IMR-90 (cell line): ENCODE measurements at regions of chr4 and their contacts with region 1.

Region 1: GRCh38 chr4:26459054-26459755 is 31.1 kb downstream of the CCKAR start:
- DNase-seq: peak; percentile 86
- ATAC-seq: peak; percentile 53
- H3K4me3 ChIP-seq: no peak overlapping the region
- H3K27ac ChIP-seq: peak overlapping the region; percentile 82; the same call in 1 of the 2 replicates
- H3K4me1 ChIP-seq: peaks cover 22% of the 10 kb centered on the region
- H3K27me3 ChIP-seq: no peaks in the 10 kb centered on the region
- CTCF ChIP-seq: peak; percentile 65
- POLR2A ChIP-seq: no peak
- RAD21 ChIP-seq: peak; percentile 73

Region 2: GRCh38 chr4:25938787-25939186 is 520.4 kb before region 1 on chr4:
- CTCF ChIA-PET with region 1: no interaction called
- POLR2A ChIA-PET with region 1: no interaction called
- dilution Hi-C with region 1: no loop called
- in situ Hi-C with region 1: no loop called
- intact Hi-C with region 1: no loop called
- DNase-seq: peak; percentile 77
- ATAC-seq: peak; percentile 61
- H3K4me3 ChIP-seq: no peak overlapping the region
- H3K27ac ChIP-seq: no peak overlapping the region
- H3K4me1 ChIP-seq: peaks cover 8% of the 10 kb centered on the region
- H3K27me3 ChIP-seq: peaks cover 5% of the 10 kb centered on the region
- CTCF ChIP-seq: no peak
- POLR2A ChIP-seq: no peak
- RAD21 ChIP-seq: no peak

Region 3: DNA sequence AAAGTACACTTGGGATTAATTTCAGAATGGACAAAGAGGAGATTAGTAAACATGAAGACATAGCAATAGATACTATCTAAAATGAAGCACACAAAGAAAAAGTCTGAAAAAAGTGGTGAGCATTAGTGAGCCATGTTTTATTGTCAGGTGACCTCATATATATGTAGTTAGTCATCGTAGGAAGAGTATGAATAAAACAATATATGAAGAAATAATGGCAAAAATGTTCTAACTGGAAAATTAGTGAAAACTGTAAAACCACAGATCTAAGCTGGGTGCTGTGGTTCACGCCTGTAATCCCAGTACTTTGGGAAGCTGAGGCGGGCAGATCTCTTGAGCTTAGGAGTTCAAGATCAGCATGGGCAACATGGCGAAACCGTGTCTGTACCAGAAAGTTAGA is 70.5 kb before region 1 on chr4:
- CTCF ChIA-PET with region 1: interaction called, 12 read pairs
- POLR2A ChIA-PET with region 1: no interaction called
- dilution Hi-C with region 1: no loop called
- in situ Hi-C with region 1: no loop called
- intact Hi-C with region 1: no loop called
- DNase-seq: peak; percentile 13
- ATAC-seq: no peak
- H3K4me3 ChIP-seq: no peak overlapping the region
- H3K27ac ChIP-seq: no peak overlapping the region
- H3K4me1 ChIP-seq: peaks cover 4% of the 10 kb centered on the region
- H3K27me3 ChIP-seq: no peaks in the 10 kb centered on the region
- CTCF ChIP-seq: no peak
- POLR2A ChIP-seq: no peak
- RAD21 ChIP-seq: no peak

Region 4: DNA sequence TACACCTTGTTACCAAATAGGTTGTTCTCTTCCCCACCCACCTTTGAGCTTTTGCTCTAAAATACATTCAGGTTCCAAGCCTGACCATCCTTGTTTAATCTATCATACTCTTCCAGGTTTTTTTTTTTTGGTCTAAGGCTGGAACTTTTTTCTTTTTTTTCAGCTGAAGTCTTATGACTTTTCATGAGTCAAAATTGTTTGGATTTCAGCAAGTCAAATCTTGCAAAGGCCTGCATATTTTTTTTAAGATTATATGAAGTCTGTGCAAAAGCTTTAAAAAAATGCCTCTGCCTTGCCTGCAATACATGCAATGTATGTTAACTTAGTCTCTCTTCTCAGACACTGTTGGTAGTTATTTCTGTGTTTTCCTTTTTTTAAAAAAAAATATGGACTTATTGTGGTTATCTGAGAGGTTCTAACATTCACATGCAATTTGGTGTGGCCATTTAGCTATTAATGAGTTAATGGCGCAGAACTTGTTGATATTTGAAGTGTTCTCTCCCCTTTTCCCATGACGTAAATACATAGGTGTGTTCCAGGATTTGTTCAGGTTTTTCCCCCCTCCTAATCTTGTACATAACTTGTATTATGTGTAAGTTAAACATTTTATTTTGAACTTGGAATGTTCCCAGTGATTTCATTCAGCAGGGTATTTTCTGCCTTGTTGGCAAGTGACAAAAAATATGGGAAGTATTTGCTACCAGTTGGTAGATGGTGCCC is 27.6 kb before region 1 on chr4:
- CTCF ChIA-PET with region 1: interaction called, 10 read pairs
- POLR2A ChIA-PET with region 1: no interaction called
- dilution Hi-C with region 1: no loop called
- in situ Hi-C with region 1: no loop called
- intact Hi-C with region 1: no loop called
- DNase-seq: peak; percentile 55
- ATAC-seq: no peak
- H3K4me3 ChIP-seq: no peak overlapping the region
- H3K27ac ChIP-seq: no peak overlapping the region
- H3K4me1 ChIP-seq: peaks cover 5% of the 10 kb centered on the region
- H3K27me3 ChIP-seq: no peaks in the 10 kb centered on the region
- CTCF ChIP-seq: no peak
- POLR2A ChIP-seq: no peak
- RAD21 ChIP-seq: no peak

Region 5: GRCh38 chr4:26583865-26584652 is 124.9 kb after region 1 on chr4 and contains the start of gene TBC1D19:
- CTCF ChIA-PET with region 1: no interaction called
- POLR2A ChIA-PET with region 1: no interaction called
- dilution Hi-C with region 1: no loop called
- in situ Hi-C with region 1: no loop called
- intact Hi-C with region 1: loop called (anchors 2 kb)
- DNase-seq: peak; percentile 85
- ATAC-seq: peak; percentile 99
- H3K4me3 ChIP-seq: peak within 1 kb of the TSS; percentile 76
- H3K27ac ChIP-seq: peak within 1 kb of the TSS; percentile 69
- H3K4me1 ChIP-seq: no peaks in the 10 kb centered on the region
- H3K27me3 ChIP-seq: no peaks in the 10 kb centered on the region
- CTCF ChIP-seq: peak; percentile 4; the same call in 1 of the 2 replicates
- POLR2A ChIP-seq: no peak
- RAD21 ChIP-seq: peak; percentile 33
- total RNA-seq, gene TBC1D19: 17.6 and 31.4 TPM in 2 replicates

Region 6: DNA sequence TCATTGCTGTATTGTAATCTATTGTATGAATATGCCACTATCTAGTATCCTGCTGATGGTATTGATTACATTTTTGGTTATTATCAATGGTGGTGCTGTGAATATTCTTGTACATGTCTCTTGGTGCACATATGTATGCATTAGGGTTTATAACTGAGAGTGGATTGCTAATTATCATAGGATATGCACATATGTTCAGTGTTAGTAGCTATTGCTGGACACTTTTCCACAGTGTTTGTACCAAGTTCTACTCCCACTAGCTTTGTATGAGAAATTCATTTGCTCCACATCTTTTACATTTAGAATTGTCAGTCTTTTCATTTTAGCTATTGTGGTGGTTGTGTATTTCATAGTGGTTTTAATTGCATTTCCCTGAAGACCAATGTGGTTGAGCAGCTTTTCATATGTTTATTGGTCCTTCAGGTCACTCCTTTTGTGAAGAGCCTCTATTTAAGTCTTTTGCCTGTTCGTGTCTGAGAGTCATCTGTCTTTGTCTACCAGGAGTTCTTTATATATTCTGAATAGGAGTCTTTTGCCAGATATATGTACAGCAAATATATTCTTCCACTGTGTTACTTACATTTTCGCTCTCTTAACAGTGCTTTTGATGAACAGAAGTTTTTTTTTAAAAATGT is 211.8 kb after region 1 on chr4:
- CTCF ChIA-PET with region 1: no interaction called
- POLR2A ChIA-PET with region 1: interaction called, 11 read pairs
- dilution Hi-C with region 1: no loop called
- in situ Hi-C with region 1: no loop called
- intact Hi-C with region 1: no loop called
- DNase-seq: no peak
- ATAC-seq: no peak
- H3K4me3 ChIP-seq: no peak overlapping the region
- H3K27ac ChIP-seq: no peak overlapping the region
- H3K4me1 ChIP-seq: no peaks in the 10 kb centered on the region
- H3K27me3 ChIP-seq: no peaks in the 10 kb centered on the region
- CTCF ChIP-seq: no peak
- POLR2A ChIP-seq: no peak
- RAD21 ChIP-seq: no peak

Region 7: DNA sequence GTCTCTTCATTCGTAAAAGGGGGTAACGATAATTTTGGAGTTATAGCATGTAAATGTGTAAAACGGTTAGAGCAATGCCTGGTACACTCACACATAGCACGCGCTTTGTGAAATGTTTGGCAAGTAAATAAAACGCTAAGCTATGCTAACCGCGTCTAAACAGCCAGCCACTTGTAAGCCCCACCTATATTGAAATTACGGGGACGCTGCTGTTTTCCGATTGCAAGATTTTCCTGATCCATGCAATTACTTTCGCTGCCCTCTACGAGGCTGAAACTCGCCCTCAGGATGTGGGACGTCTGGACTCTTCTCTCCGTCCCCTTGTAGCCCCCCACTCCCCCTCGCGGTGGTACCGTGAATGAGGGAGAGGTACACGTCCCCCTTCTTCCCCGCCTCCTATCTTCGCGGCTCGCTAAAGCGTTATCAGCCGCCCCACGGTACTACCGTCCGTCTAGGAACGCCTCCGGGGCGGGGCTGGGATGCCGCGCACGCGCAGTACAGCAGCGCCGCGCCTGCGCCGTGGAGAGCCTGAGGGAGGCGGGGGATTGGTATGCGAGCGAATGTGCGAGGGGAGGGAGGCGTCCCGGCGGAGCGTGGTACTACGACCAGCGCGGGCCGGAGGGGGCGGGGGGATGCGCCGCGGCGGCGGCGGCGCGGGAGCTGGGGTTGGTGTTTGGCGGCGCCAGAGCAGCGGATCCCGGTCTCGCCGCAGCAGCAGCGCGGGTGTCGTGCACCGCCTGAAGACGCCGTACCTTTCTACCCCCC is 401.1 kb after region 1 on chr4 and contains the start of gene STIM2:
- CTCF ChIA-PET with region 1: no interaction called
- POLR2A ChIA-PET with region 1: no interaction called
- dilution Hi-C with region 1: no loop called
- in situ Hi-C with region 1: no loop called
- intact Hi-C with region 1: loop called (anchors 2 kb)
- DNase-seq: peak; percentile 96
- ATAC-seq: peak; percentile 78
- H3K4me3 ChIP-seq: peak within 1 kb of the TSS; percentile 62
- H3K27ac ChIP-seq: peak within 1 kb of the TSS; percentile 62
- H3K4me1 ChIP-seq: peaks cover 8% of the 10 kb centered on the region; the same call in 1 of the 2 replicates
- H3K27me3 ChIP-seq: no peaks in the 10 kb centered on the region
- CTCF ChIP-seq: peak; percentile 44
- POLR2A ChIP-seq: peak; percentile 35; the same call in 1 of the 2 replicates
- RAD21 ChIP-seq: no peak
- total RNA-seq, gene STIM2: 24.2 and 27.6 TPM in 2 replicates